ENCODE measurements at regions of chr6 and their contacts with region 1.

Region 1: GRCh38 chr6:30326526-30327260 is at the start of gene TRIM39:
- DNase-seq: peak; percentile 92
- ATAC-seq: peak; percentile 89 to 90
- total RNA-seq, gene TRIM39: 9.5 to 11.2 TPM

Region 2: GRCh38 chr6:30212865-30213666 is 113.6 kb before region 1 on chr6 and contains the start of gene TRIM26:
- intact Hi-C with region 1: loop called in 1 of 2 experiments (anchors 10 kb)
- DNase-seq: peak; percentile 97
- ATAC-seq: peak; percentile 96
- total RNA-seq, gene TRIM26: 22.1 to 24.1 TPM

Region 3: GRCh38 chr6:30862156-30862875 is 535.6 kb after region 1 on chr6:
- intact Hi-C with region 1: no loop called
- DNase-seq: no peak
- ATAC-seq: no peak